Activated CD4-positive, alpha-beta T cell treated with anti-CD3 and anti-CD28 coated beads, Interleukin-2, amount 10 ng/mL, durations not matched to agents 24 days and 14 days (primary cell): ENCODE measurements at regions of chr14 and their contacts with region 1.

Region 1: DNA sequence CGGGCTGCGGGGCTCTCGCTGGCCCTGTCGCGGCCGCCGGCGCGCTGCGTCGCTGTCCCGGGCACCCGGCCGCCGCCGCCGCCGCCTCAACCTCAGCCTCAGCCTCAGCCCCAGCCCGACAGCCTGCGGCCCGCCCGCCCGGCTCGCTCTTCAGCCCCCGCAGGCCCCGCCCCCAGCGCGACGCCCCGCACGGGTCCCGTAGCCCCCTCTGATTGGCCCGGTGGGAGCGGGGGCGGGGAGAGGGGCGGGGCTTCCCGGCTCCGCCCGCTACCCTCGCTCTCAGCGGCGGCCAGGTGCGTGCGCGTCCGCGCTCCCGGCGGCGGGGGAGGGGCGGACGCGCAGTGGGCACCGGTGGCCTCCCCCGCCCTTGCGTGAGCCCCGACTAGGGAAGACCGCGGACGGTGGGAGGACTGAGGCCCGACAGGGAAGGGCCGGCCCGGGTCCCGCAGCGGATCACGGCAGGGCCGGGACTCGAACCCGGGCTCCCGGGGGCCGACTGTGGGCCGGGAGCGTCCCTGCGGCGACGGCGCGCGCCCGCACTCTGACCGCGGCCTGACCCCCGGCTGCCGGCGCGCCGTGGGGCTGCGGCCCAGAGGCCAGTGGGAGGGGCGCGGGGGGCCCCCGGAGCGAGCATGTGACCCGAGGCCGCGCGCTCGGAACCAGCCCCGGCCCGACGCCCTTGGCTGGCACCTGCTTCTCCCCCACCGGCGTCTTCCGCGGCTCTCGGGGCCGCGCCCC is at the start of gene PPP1R13B:
- DNase-seq: peak; percentile 97
- H3K4me3 Mint-ChIP-seq: peak within 1 kb of the TSS; percentile 80
- H3K27ac Mint-ChIP-seq: peak within 1 kb of the TSS; percentile 1
- H3K4me1 Mint-ChIP-seq: peaks cover 13% of the 10 kb centered on the region
- H3K27me3 Mint-ChIP-seq: peaks cover 29% of the 10 kb centered on the region
- total RNA-seq, gene PPP1R13B: 8.6 and 8.8 TPM in 2 replicates

Region 2: DNA sequence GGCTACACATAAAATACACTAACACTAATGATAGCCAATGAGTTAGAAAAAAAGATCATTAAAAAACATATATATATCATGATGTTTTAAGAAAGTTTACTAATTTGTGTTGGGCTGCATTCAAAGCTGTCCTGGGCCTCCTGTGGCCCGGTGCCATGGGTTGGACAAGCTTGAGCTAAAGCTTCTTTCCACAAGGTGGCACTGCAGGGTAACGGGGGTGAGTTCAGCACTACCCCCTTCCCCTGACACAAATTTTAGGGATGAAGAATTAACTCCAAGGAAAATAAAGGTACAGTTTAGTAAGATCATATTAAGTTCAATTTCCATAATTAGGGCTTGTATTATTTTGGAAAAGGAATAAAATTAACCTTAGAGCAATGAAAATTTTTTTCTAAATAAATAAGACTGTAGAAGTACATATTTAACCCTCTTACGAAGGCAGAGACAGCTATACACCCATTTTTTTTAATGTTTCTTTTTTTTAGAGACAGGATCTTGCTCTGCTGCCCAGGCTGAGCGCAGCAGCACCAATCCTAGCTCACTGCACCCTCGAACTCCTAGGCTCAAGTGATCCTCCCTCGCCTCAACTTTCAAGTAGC is 39.1 kb before region 1 on chr14:
- intact Hi-C with region 1: no loop called
- DNase-seq: peak; percentile 90
- H3K4me3 Mint-ChIP-seq: no peak overlapping the region
- H3K27ac Mint-ChIP-seq: no peak overlapping the region
- H3K4me1 Mint-ChIP-seq: peaks cover 6% of the 10 kb centered on the region
- H3K27me3 Mint-ChIP-seq: no peaks in the 10 kb centered on the region

Region 3: GRCh38 chr14:103871596-103872480 is 24.2 kb after region 1 on chr14:
- intact Hi-C with region 1: loop called (anchors 2 kb)
- DNase-seq: peak; percentile 94
- H3K4me3 Mint-ChIP-seq: peak overlapping the region; percentile 82
- H3K27ac Mint-ChIP-seq: peak overlapping the region; percentile 72
- H3K4me1 Mint-ChIP-seq: peaks cover 9% of the 10 kb centered on the region
- H3K27me3 Mint-ChIP-seq: no peaks in the 10 kb centered on the region

Region 4: DNA sequence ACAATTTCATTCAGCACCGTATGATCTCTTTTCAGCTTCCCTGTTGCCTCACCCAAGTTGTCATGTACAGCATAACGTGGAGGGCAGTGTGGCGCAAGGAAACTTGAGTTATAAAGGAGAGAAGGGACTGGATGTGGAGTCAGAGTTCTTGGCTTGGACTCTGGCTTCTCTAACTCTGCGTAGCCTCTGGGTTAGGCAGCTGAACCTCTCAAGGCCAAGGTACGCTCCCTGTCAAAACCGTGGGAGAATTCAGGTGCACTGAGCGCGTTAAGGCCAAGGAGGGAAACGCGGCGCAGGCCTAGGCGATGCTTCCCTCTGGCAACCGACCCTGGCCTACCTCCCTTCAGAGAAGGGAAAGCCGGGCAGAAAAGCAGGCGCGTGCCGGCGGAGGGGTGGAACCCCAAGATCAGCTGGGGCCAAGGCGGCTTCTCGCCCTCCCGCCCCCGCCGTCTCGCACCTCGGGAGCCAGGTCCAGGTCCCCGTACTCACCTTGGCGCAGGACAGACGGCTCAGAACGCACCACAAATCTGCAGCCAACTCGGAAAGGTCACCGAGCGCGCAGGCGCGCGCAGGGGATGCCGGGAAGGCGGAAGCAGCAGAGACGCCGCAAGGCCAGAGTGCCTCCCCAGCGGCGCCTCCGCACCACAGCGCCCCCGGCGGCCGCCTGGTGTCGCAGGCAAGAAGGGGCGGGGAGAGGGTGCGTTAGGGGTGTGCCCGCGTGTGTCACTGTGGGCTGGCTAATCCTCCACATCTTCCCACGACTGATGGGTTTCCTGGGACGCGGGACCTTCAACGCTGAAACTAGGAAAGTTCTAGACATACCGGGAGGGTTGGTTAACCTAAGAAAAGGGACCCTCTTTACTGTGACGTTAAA is 73.6 kb after region 1 on chr14:
- intact Hi-C with region 1: loop called (anchors 5 kb)
- DNase-seq: peak; percentile 99
- H3K4me3 Mint-ChIP-seq: peak overlapping the region; percentile 93
- H3K27ac Mint-ChIP-seq: peak overlapping the region; percentile 87
- H3K4me1 Mint-ChIP-seq: peaks cover 9% of the 10 kb centered on the region
- H3K27me3 Mint-ChIP-seq: peaks cover 9% of the 10 kb centered on the region